Activated CD4-positive, alpha-beta T cell treated with anti-CD3 and anti-CD28 coated beads, Interleukin-2, amount 10 ng/mL, durations not matched to agents 24 days and 14 days (primary cell): ENCODE measurements at regions of chr15 and their contacts with region 1.

Region 1: GRCh38 chr15:41972253-41973242 is at the start of gene EHD4:
- DNase-seq: peak; percentile 99
- H3K4me3 Mint-ChIP-seq: peak within 1 kb of the TSS; percentile 94
- H3K27ac Mint-ChIP-seq: peak within 1 kb of the TSS; percentile 95
- H3K4me1 Mint-ChIP-seq: peaks cover 47% of the 10 kb centered on the region
- H3K27me3 Mint-ChIP-seq: peaks cover 22% of the 10 kb centered on the region
- total RNA-seq, gene EHD4: 28.4 and 28.9 TPM in 2 replicates

Region 2: GRCh38 chr15:41774062-41774881 is 198.3 kb before region 1 on chr15 and contains the start of gene MAPKBP1:
- intact Hi-C with region 1: loop called (anchors 2 kb)
- DNase-seq: peak; percentile 100
- H3K4me3 Mint-ChIP-seq: peak within 1 kb of the TSS; percentile 95
- H3K27ac Mint-ChIP-seq: peak within 1 kb of the TSS; percentile 94
- H3K4me1 Mint-ChIP-seq: peaks cover 49% of the 10 kb centered on the region
- H3K27me3 Mint-ChIP-seq: no peaks in the 10 kb centered on the region
- total RNA-seq, gene MAPKBP1: 24.8 and 27.1 TPM in 2 replicates

Region 3: GRCh38 chr15:41827880-41828806 is 144.4 kb before region 1 on chr15 and contains the start of gene JMJD7:
- intact Hi-C with region 1: loop called (anchors 2 kb)
- DNase-seq: peak; percentile 98
- H3K4me3 Mint-ChIP-seq: peak within 1 kb of the TSS; percentile 86
- H3K27ac Mint-ChIP-seq: peak within 1 kb of the TSS; percentile 87
- H3K4me1 Mint-ChIP-seq: peaks cover 38% of the 10 kb centered on the region
- H3K27me3 Mint-ChIP-seq: peaks cover 2% of the 10 kb centered on the region
- total RNA-seq, gene JMJD7: 18.3 and 20.1 TPM in 2 replicates

Region 4: GRCh38 chr15:41936649-41937567 is 35.6 kb before region 1 on chr15:
- intact Hi-C with region 1: loop called (anchors 1 kb)
- DNase-seq: peak; percentile 94
- H3K4me3 Mint-ChIP-seq: peak overlapping the region; percentile 75
- H3K27ac Mint-ChIP-seq: peak overlapping the region; percentile 100
- H3K4me1 Mint-ChIP-seq: peaks cover 70% of the 10 kb centered on the region
- H3K27me3 Mint-ChIP-seq: no peaks in the 10 kb centered on the region

Region 5: GRCh38 chr15:41957021-41957897 is 15.3 kb before region 1 on chr15:
- intact Hi-C with region 1: no loop called
- DNase-seq: no peak
- H3K4me3 Mint-ChIP-seq: no peak overlapping the region
- H3K27ac Mint-ChIP-seq: peak overlapping the region; percentile 30
- H3K4me1 Mint-ChIP-seq: peaks cover 26% of the 10 kb centered on the region
- H3K27me3 Mint-ChIP-seq: no peaks in the 10 kb centered on the region

Region 6: DNA sequence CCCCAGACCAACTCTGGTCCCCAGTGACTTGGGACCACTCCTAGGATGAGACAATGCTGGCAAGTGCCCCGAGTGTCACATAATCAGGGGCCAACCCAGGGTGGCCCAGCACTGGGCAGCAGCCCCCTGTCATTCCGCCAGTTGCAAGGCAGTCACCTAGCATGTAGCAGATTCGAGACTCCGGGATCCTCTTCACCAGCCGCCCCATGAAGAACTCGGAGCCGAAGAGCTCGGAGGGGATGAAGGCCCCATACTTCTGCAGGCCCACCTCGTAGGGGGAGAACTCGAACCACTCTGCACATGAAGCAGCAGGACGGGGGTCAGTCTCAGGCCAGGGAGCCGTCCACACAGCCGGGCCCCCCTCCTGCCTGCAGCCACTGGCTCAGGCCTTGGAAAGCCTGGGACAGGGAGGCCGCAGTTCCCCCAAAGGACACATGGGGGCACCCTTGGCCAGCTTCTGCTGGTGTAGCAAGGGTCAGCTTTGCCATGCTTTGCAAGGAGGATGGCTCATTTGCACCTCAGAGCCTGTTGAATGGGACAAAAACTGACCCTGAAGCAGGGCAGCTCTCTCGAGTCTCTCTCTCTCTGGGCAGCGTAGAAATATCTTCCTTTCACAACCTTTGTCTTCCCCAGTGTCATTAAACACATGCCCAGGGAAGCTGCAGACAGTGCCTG is 16.8 kb after region 1 on chr15:
- intact Hi-C with region 1: no loop called
- DNase-seq: peak; percentile 96
- H3K4me3 Mint-ChIP-seq: no peak overlapping the region
- H3K27ac Mint-ChIP-seq: no peak overlapping the region
- H3K4me1 Mint-ChIP-seq: no peaks in the 10 kb centered on the region
- H3K27me3 Mint-ChIP-seq: no peaks in the 10 kb centered on the region

Region 7: DNA sequence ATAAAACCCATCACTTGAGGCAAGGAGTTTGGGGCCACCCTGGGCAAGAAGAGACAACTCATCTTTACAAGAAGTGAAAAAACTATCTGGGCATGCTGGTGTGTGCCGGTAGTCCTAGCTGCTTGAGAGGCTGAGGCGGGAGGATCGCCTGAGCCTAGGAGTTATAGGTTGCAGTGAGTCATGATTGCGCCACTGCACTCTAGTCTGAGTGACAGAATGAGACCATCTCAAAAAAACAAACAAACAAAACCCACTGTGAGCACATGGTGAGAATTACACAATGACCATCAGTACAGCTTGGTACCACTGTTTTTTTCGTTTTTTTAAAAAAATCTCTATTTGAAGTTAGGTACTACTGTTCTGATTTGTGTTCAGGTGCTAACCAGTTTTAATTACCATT is 222.0 kb after region 1 on chr15:
- intact Hi-C with region 1: loop called (anchors 5 kb)
- DNase-seq: no peak
- H3K4me3 Mint-ChIP-seq: no peak overlapping the region
- H3K27ac Mint-ChIP-seq: peak overlapping the region; percentile 76
- H3K4me1 Mint-ChIP-seq: peaks cover 35% of the 10 kb centered on the region
- H3K27me3 Mint-ChIP-seq: no peaks in the 10 kb centered on the region

Region 8: DNA sequence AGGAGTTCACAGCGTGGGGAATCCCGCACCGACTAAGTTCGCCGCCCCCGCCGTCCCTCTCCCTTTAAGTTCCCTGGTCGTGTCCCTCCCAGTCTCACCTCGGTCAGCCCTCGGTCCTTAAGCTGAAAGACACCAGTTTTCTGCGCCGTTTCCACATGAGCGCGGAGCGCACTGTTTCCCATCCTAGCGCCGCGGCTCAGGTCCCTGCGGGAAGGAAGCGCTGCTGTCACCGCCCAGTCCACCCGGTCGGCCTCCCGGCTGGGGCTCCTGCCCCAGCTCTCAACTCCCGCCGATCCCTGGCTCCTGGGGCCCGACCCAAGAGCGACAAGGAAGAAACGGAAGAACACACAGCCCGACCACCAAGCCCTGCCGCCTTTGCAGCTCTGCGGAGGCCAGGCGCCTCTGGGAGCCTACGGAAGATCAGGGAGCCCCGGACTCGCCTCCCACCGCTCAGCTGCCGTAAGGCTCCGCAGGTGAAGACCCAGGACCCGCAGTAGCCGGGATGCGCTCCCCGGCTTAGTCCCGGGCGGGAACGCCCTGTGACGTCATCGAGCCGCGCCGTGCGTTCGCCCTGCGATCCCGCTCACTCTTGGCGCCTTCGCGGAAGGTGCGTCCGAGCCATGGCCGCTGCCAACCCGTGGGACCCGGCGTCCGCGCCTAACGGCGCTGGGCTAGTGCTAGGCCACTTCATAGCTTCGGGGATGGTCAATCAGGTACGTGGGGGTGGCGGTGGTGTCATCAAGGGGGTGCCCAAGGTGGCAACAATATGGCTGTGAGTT is 575.9 kb after region 1 on chr15 and contains the starts of genes HAUS2 and LRRC57:
- intact Hi-C with region 1: loop called (anchors 5 kb)
- DNase-seq: peak; percentile 97
- H3K4me3 Mint-ChIP-seq: peak within 1 kb of the TSS; percentile 96
- H3K27ac Mint-ChIP-seq: peak within 1 kb of the TSS; percentile 95
- H3K4me1 Mint-ChIP-seq: peaks cover 46% of the 10 kb centered on the region
- H3K27me3 Mint-ChIP-seq: no peaks in the 10 kb centered on the region
- total RNA-seq, gene HAUS2: 41.1 and 48.0 TPM in 2 replicates
- total RNA-seq, gene LRRC57: 19.0 and 21.1 TPM in 2 replicates

Region 9: GRCh38 chr15:42591238-42591934 is 618.8 kb after region 1 on chr15:
- intact Hi-C with region 1: no loop called
- DNase-seq: no peak
- H3K4me3 Mint-ChIP-seq: no peak overlapping the region
- H3K27ac Mint-ChIP-seq: no peak overlapping the region
- H3K4me1 Mint-ChIP-seq: peaks cover 1% of the 10 kb centered on the region
- H3K27me3 Mint-ChIP-seq: no peaks in the 10 kb centered on the region